ENCODE measurements at regions of chr2 and their contacts with region 1.

Region 1: GRCh38 chr2:62765619-62766376 is 60.3 kb downstream of the EHBP1 start:
- DNase-seq: no peak
- ATAC-seq: no peak
- H3K4me3 ChIP-seq: no peak overlapping the region
- H3K27ac ChIP-seq: no peak overlapping the region
- H3K4me1 ChIP-seq: peaks cover 1% of the 10 kb centered on the region; the same call in 1 of the 2 replicates
- H3K27me3 ChIP-seq: no peaks in the 10 kb centered on the region
- CTCF ChIP-seq: no peak

Region 2: GRCh38 chr2:62724106-62724505 is 41.7 kb before region 1 on chr2:
- CTCF ChIA-PET with region 1: interaction called, 12 read pairs
- POLR2A ChIA-PET with region 1: no interaction called
- in situ Hi-C with region 1: no loop called
- intact Hi-C with region 1: no loop called
- DNase-seq: no peak
- ATAC-seq: no peak
- H3K4me3 ChIP-seq: no peak overlapping the region
- H3K27ac ChIP-seq: no peak overlapping the region
- H3K4me1 ChIP-seq: peaks cover 11% of the 10 kb centered on the region; the same call in 1 of the 2 replicates
- H3K27me3 ChIP-seq: no peaks in the 10 kb centered on the region
- CTCF ChIP-seq: no peak